ENCODE measurements at regions of chr2 and their contacts with region 1.

Region 1: GRCh38 chr2:37231241-37232130 is at the starts of genes CEBPZ and NDUFAF7:
- DNase-seq: peak; percentile 86
- H3K4me3 Mint-ChIP-seq: no peak within 1 kb of the TSS
- H3K27ac Mint-ChIP-seq: no peak within 1 kb of the TSS
- H3K4me1 Mint-ChIP-seq: peaks cover 26% of the 10 kb centered on the region
- H3K27me3 Mint-ChIP-seq: no peaks in the 10 kb centered on the region
- total RNA-seq, gene CEBPZ: 75.4 and 79.2 TPM in 2 replicates
- total RNA-seq, gene NDUFAF7: 23.0 and 27.1 TPM in 2 replicates

Region 2: DNA sequence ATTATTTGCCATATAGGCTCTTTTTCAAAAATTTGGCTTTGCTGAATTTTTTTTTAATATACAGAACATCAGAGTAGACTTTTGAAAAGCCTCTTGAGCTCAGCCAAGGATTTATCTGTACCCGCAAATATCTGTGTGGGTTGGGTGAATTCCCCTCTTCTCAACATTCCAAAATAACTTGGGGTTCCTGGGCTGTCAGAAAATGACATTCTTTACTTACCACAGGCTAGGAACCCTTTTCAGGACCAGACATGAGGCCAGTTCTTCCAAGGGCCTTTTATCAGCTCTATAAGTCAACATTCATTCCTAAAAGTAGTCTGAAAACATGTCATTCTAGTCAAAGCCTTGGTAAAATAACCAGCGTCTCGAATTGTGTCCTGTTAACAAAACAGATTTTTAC is 604.7 kb before region 1 on chr2:
- intact Hi-C with region 1: no loop called
- DNase-seq: no peak
- H3K4me3 Mint-ChIP-seq: no peak overlapping the region
- H3K27ac Mint-ChIP-seq: no peak overlapping the region
- H3K4me1 Mint-ChIP-seq: no peaks in the 10 kb centered on the region
- H3K27me3 Mint-ChIP-seq: peaks cover 3% of the 10 kb centered on the region

Region 3: GRCh38 chr2:36966370-36967235 is 264.9 kb before region 1 on chr2 and contains the start of gene STRN:
- intact Hi-C with region 1: loop called (anchors 1 kb)
- DNase-seq: peak; percentile 99
- H3K4me3 Mint-ChIP-seq: peak within 1 kb of the TSS; percentile 95
- H3K27ac Mint-ChIP-seq: peak within 1 kb of the TSS; percentile 98
- H3K4me1 Mint-ChIP-seq: peaks cover 61% of the 10 kb centered on the region
- H3K27me3 Mint-ChIP-seq: no peaks in the 10 kb centered on the region
- total RNA-seq, gene STRN: 28.8 and 29.0 TPM in 2 replicates

Region 4: DNA sequence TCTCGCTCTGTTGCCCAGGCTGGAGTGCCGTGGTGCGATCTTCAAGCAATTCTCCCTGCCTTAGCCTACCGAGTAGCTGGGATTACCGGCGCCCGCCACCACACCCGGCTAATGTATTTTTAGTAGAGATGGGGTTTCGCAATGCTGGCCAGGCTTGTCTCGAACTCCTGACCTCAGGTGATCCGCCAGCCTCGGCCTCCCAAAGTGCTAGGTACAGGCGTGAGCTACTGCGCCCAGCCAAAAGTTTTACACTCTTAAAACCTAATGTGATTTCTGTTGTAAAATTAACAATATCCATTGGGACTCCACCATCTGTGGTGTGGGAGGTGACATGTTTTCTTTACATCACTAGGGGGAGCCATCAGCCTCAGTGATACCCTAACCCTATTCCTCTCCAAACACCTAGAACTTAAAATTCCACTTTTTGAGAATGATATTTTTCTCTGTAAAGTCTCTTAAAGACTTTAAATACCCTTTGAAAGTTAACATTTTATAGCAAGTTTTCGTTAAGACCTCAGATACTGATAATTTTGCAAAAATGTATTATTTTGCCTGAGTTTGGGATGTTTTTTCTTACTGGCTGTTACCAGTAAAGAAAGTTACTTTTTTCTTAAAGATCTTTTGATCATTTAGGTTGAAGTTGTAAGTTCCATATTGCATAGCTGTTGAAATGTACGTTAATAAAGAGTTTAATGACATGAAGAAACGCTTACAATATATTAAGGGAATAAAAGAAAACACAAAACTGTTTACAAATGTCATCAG is 63.1 kb before region 1 on chr2:
- intact Hi-C with region 1: loop called (anchors 1 kb)
- DNase-seq: no peak
- H3K4me3 Mint-ChIP-seq: no peak overlapping the region
- H3K27ac Mint-ChIP-seq: no peak overlapping the region
- H3K4me1 Mint-ChIP-seq: no peaks in the 10 kb centered on the region
- H3K27me3 Mint-ChIP-seq: peaks cover 4% of the 10 kb centered on the region

Region 5: GRCh38 chr2:37244017-37244416 is 12.5 kb after region 1 on chr2:
- intact Hi-C with region 1: loop called (anchors 1 kb)
- DNase-seq: no peak
- H3K4me3 Mint-ChIP-seq: no peak overlapping the region
- H3K27ac Mint-ChIP-seq: no peak overlapping the region
- H3K4me1 Mint-ChIP-seq: peaks cover 36% of the 10 kb centered on the region
- H3K27me3 Mint-ChIP-seq: no peaks in the 10 kb centered on the region

Region 6: DNA sequence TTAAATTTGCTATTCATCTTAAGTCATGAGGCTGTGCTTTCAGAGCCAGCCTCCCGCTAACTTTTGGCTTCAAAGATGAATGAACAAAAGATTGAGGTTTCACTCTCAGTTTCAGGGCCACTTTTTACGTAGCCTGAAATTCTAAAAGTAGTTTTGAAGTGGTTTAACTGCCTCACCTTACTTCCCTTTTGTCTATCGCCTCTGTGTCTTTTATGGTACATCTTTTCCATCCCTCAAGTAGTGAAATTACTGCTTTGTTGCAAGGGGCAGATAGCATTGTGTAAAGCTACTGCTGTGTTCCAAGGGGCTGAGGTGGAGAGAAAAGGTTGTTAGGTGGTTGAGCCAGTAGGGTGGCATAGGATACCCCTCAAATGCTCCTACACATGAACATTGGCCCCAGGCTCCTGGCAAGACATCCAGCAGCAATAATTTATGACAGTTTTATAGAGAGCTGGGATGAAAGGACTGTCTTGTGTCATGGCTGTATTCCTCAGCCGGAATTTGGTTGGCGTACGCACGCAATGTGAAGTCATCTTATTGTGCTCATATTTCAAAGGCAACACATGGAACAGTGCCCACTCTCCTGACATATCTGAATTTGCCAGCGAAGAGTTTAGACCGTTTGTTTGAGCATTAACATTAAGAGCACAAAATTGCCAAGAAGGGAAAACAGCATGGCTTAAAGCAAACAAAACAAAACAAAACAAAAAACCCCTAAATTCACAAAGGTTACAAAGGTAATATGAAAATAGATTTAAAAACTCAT is 145.1 kb after region 1 on chr2:
- intact Hi-C with region 1: loop called (anchors 1 kb)
- DNase-seq: peak; percentile 29
- H3K4me3 Mint-ChIP-seq: peak overlapping the region; percentile 34
- H3K27ac Mint-ChIP-seq: peak overlapping the region; percentile 88
- H3K4me1 Mint-ChIP-seq: peaks cover 51% of the 10 kb centered on the region
- H3K27me3 Mint-ChIP-seq: peaks cover 51% of the 10 kb centered on the region

Region 7: DNA sequence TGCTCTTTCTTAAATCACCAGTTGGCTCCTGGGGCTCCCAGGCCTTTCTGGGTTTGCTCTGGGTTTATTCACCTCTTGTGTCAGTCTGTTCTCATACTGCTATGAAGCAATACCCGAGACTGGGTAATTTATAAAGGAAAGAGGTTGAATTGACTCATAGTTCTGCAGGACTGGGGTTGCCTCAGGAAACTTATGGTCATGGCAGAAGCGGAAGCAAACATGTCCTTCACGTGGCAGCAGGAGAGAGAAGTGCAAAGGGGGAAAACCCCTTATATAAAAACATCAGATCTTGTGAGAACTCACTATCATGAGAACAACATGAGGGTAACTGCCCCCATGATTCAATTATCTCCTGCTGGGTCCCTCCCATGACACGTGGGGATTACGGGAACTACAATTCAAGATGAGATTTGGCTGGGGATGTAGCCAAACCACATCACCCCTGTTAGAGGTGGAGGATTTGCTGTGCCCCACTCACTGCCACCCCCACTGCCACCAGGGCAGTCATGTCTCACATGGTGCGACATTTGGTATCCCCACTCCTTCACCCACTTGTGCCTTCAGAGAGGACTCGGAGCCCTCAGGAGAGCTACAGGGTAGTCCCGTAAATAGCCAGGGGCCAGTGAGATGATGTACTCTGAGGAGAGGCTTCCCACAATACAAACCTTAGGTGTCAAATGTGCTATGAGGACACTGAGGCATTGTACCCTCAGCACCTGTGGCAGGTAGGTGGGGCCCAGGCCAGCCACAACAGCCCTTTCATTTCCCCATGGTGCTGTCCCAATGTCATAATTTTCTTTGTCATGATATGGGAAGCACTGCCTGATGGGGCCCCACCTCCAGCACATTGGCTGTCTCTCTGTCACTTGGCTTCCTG is 404.3 kb after region 1 on chr2:
- intact Hi-C with region 1: loop called (anchors 1 kb)
- DNase-seq: peak; percentile 63
- H3K4me3 Mint-ChIP-seq: peak overlapping the region; percentile 34
- H3K27ac Mint-ChIP-seq: peak overlapping the region; percentile 86
- H3K4me1 Mint-ChIP-seq: peaks cover 37% of the 10 kb centered on the region
- H3K27me3 Mint-ChIP-seq: peaks cover 18% of the 10 kb centered on the region

Region 8: GRCh38 chr2:38377050-38377828 is 1145.8 kb after region 1 on chr2 and contains the start of gene ATL2:
- intact Hi-C with region 1: loop called (anchors 10 kb)
- DNase-seq: peak; percentile 92
- H3K4me3 Mint-ChIP-seq: peak within 1 kb of the TSS; percentile 95
- H3K27ac Mint-ChIP-seq: peak within 1 kb of the TSS; percentile 96
- H3K4me1 Mint-ChIP-seq: peaks cover 55% of the 10 kb centered on the region
- H3K27me3 Mint-ChIP-seq: peaks cover 14% of the 10 kb centered on the region
- total RNA-seq, gene ATL2: 62.1 and 72.5 TPM in 2 replicates